WTC11 (cell line): ENCODE measurements at regions of chr15 and their contacts with region 1.

Region 1: GRCh38 chr15:73265536-73266153 is 103.1 kb downstream of the HCN4 start:
- DNase-seq: peak; percentile 75
- ATAC-seq: peak; percentile 92
- H3K4me3 Mint-ChIP-seq: no peak overlapping the region
- H3K27ac Mint-ChIP-seq: no peak overlapping the region; the same call in 1 of the 2 replicates
- H3K4me1 Mint-ChIP-seq: peaks cover 5% of the 10 kb centered on the region; the same call in 1 of the 2 replicates
- H3K27me3 Mint-ChIP-seq: no peaks in the 10 kb centered on the region
- CTCF ChIP-seq: peak; percentile 62

Region 2: DNA sequence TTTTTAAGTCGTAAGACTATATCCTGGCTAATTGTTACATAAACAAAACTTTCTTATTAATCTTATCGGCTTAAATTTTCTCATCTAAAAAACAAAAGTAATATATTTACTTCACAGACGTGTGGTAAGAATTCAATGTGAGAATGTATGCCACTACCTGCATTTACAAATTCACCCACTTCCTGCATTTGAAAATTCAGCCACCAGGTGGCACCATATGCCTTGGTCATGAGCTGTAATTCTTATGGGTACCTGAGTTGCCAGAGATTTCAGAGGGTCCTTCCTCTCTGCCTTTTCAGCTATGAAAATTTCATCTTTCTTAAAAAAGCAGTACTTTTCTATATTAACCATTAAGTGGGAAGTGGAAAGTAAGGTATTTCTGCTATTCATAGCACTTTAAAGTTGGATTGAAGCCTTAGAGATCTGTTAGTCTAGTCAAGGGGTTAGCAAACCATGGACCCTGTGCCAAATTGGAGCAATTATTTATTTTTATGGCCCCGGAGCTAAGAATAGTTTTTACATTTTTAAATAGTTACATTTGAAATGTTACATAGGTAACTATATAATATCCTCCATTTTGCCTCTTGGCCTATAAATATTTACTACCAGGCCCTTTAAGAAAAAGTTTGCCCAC is 24.7 kb before region 1 on chr15:
- CTCF ChIA-PET with region 1: interaction called, 29 read pairs
- POLR2A ChIA-PET with region 1: no interaction called
- DNase-seq: peak; percentile 78
- ATAC-seq: 0 out of 2 replicates have a peak, but pooled peaks have one; percentile 28
- H3K4me3 Mint-ChIP-seq: no peak overlapping the region
- H3K27ac Mint-ChIP-seq: no peak overlapping the region
- H3K4me1 Mint-ChIP-seq: no peaks in the 10 kb centered on the region
- H3K27me3 Mint-ChIP-seq: no peaks in the 10 kb centered on the region
- CTCF ChIP-seq: peak; percentile 69

Region 3: DNA sequence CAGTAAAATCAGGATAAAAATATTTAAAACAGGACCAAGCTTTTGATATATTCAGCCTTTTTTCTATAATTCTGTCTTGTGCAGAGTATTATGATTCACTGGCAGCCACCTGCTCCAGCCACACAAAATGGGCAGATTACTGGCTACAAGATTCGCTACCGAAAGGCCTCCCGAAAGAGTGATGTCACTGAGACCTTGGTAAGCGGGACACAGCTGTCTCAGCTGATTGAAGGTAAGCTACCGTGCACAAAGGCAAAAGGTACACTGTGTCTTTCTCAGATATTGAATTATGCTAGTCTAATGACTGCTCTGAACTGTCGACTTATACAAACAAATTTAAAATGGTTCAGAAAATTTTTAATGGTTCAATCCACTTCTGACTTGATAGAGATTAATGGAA is 11.0 kb before region 1 on chr15:
- CTCF ChIA-PET with region 1: interaction called, 29 read pairs
- POLR2A ChIA-PET with region 1: no interaction called
- DNase-seq: no peak
- ATAC-seq: no peak
- H3K4me3 Mint-ChIP-seq: no peak overlapping the region
- H3K27ac Mint-ChIP-seq: no peak overlapping the region
- H3K4me1 Mint-ChIP-seq: no peaks in the 10 kb centered on the region
- H3K27me3 Mint-ChIP-seq: no peaks in the 10 kb centered on the region
- CTCF ChIP-seq: no peak

Region 4: DNA sequence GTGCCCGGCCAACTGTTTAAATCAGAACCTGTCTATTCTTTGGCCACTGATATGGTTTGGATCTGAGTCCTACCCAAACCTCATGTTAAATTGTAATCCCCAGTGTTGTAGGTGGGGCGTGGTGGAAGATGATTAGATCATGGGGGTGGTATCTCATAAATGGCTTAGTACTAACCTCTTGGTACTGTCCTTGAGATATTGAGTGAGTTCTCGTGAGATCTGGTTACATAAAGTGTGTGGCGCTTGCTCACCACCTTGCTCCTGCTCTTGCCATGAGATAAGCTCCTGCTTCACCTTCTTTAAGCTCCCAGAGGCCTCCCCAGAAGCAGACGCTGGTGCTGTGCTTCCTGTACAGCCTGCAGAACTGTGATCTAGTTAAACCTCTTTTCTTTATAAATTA is 219.7 kb after region 1 on chr15:
- CTCF ChIA-PET with region 1: no interaction called
- POLR2A ChIA-PET with region 1: no interaction called
- DNase-seq: no peak
- ATAC-seq: no peak
- H3K4me3 Mint-ChIP-seq: no peak overlapping the region
- H3K27ac Mint-ChIP-seq: no peak overlapping the region
- H3K4me1 Mint-ChIP-seq: no peaks in the 10 kb centered on the region
- H3K27me3 Mint-ChIP-seq: no peaks in the 10 kb centered on the region
- CTCF ChIP-seq: no peak

Region 5: DNA sequence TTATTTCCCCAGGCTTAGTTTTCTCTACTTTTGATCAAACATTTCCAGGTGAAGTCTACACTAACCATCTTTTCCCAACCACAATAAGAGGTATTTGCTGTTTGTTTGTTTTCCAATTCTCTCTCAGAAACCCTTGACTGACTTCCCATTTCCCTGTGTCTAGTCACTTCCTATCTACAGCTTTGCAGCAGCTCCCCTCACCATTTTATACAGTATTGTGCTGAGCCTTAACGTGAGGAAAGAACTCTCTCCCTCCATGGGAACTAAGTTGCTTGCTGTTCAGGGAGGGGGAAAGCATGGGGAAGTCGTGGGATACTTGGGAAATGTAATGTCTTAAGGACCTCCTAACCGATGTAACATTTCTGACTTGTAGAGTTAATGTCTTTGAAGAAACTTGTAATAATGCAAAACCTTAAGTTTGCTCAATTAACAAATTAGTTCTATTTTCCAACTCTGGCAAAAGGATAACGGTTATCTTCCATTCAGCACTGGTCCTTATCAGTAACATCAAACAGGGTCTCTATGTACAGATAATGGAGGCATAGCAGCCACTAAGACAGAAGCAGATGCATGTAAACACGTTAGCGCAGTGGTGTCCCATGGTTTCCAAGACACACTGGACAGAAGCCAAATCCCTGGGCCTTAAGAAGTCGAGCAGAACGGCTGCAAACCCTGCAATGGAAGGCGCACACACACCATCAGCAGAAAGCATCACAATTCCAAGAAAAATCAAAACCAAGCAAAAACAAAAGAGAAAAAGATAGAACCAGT is 327.8 kb after region 1 on chr15:
- CTCF ChIA-PET with region 1: no interaction called
- POLR2A ChIA-PET with region 1: no interaction called
- DNase-seq: no peak
- ATAC-seq: no peak
- H3K4me3 Mint-ChIP-seq: no peak overlapping the region
- H3K27ac Mint-ChIP-seq: peak overlapping the region; percentile 32; the same call in 1 of the 2 replicates
- H3K4me1 Mint-ChIP-seq: peaks cover 50% of the 10 kb centered on the region
- H3K27me3 Mint-ChIP-seq: no peaks in the 10 kb centered on the region
- CTCF ChIP-seq: no peak

Region 6: DNA sequence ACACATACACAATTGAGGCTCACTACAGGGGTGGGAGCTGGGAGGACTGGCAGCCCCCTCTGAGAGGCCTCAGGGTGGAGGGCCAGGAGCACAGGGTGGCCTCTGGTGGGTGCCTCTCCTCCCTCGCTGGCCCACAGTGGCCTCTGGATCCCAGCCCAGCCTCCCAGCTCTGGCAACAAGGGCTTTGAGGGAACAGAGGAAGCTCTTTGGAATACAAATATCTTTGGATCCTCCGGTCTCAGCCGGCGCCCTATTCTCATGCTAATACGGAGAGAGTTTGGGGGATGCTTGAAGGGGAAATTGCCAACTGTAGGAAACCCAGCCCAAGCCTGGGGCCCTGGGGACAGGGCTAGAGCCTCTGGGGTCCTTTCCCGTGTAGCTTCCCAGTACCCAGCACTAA is 520.9 kb after region 1 on chr15:
- CTCF ChIA-PET with region 1: no interaction called
- POLR2A ChIA-PET with region 1: no interaction called
- DNase-seq: peak; percentile 80
- ATAC-seq: peak; percentile 88
- H3K4me3 Mint-ChIP-seq: no peak overlapping the region
- H3K27ac Mint-ChIP-seq: peak overlapping the region; percentile 74
- H3K4me1 Mint-ChIP-seq: peaks cover 57% of the 10 kb centered on the region
- H3K27me3 Mint-ChIP-seq: peaks cover 4% of the 10 kb centered on the region
- CTCF ChIP-seq: no peak